Posterior cingulate gyrus (tissue), 11 donors: ENCODE measurements at regions of chr12 and their contacts with region 1.

Region 1: DNA sequence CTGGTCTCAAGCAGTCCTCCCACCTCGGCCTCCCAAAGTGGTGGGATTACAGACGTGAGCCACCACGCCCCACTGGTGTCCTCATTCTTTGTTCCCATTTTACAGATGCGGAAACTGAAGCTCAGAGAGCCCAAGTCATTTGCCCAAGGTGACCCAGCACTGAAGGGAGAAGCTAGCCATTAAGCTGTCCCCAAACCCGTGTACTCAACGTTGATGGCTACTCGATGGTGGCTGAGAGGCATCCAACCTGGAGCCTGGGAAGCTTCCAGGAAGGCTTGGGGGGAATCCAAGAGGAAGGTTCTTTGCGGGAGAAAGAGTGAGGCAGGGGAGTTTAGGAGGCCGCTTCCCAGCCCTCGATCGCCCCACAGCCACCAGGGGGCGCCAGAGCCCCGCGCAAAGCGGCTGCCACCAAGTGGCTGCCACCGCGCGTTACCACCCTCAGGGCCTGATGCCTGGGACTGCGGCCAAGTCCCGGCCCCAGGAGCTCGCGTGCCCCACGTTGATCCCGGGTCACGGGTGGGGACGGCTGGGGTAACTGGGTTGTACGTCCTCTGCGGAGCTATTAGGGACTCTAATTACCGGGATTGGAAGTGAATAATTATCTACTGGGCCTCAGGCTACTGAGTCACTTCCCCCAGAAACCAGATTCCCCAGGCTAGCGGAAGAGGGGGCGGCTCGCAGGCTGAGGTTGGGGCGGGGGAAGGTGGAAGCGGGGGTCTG is 8.8 kb upstream of the SH2B3 start:
- DNase-seq: peak; percentile 67 to 98 (median 86)

Region 2: DNA sequence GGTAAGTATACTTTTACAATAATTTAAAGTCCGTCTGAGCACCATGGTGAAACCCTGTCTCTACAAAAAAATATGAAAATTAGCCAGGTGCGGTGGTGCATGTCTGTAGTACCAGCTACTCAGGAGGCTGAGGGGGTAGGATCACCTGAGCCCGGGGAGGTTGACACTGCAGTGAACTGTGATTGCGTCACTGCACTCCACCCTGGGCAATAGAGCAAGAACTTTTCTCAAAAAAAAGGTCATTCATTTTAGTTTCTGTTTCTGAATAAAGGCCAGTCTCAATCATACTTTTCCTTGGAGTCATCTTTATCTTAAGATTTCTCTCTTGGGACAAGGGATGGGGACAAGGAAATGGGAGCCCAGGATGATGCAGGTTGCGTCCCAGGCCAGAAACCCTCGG is 1384.7 kb before region 1 on chr12:
- intact Hi-C with region 1: no loop called
- DNase-seq: no peak

Region 3: DNA sequence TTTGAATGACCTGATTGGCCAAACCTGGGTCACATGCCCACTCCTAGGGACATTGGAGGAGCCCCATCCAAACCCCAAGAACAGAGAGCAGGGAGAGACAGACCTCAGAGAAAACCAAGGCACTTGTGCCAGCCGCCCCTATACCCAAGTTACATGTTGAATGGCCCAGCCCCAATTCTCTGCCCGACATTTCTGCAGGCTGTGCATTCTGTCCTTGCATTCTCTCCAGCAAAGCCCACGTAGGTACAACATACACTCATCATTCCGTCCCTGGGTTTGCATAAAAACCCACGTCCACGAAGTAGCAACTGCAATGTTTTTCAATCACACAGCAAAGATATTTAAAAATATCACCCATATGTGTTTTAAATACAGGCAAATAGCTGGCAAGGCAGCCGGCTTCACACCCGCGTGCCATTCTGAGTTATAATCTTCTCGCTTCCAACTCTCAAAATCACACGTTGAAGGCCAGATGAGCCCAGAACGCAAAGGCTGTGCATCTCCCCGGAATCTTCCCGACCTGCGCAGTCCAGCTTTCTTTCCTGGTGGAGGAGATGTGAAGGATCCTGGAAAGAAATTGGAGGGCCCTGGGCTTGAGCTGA is 384.8 kb before region 1 on chr12:
- intact Hi-C with region 1: no loop called
- DNase-seq: peak in 7 of 10 donors; percentile 36 to 92 (median 66)

Region 4: DNA sequence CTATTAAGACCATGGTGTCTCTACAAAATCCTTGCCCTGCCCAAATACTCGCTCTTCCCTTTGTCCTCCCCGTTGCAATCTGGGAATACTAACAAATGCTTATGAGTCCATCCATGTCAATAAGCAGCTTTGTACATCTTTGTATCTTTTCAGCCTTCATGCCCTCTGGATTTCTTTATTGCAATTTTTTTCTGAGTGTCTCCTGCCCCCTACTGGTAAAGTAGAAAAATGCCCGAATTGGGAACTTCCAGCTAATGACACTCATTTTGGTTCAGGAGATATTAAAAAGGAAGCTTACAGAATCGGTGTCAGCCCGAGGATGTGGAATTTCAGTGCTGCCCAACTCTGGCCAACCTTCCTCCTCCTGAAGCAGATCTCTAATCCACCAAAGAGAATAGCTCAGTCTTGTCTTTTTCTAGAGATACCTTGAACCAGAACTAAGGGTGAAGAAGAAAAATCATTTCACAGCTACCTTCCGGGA is 54.8 kb after region 1 on chr12:
- intact Hi-C with region 1: loop called (anchors 1 kb)
- DNase-seq: no peak

Region 5: DNA sequence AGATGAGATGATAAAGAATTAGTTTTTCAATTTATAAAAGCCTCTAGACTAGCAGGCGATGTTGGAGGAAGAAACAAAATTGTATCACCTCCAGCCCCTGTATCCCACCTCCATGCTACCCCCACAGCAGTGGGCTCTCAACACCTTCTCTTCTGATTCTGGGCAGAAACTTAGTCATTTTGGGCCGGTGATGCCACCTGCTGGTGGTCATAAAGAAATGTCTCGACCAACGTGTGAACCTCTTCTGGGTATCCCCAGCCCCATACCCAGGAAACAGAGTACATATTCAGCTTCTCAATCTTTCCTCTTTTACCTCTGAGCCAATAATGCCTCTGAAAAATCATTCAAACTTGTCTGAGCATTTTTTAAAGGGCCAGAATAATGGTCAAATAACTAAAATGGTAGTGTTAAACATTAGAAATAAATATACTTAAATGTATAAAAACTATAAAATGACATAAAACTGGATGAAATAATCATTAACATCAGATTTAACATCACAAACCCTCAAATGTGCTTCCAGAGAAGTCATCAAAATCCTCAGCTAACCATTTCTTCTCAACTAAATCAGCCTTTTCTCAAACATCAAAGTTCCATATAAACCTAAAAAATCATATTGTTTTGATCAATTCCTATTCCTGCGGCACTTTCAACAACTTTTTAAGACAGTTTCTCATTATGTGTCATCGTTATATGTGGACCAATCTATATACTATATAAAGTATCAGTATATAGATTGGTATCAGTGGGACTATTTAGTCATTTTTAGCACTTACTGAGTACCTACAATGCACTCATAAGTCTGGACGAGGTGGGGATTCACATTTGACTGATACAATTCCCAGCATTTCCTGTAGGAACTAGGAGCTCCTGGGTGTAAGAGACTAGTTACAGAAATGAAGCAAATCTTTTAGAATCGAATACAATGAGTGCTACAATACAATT is 132.8 kb after region 1 on chr12:
- intact Hi-C with region 1: loop called (anchors 1 kb)
- DNase-seq: peak in 6 of 10 donors; percentile 32 to 90 (median 50)

Region 6: DNA sequence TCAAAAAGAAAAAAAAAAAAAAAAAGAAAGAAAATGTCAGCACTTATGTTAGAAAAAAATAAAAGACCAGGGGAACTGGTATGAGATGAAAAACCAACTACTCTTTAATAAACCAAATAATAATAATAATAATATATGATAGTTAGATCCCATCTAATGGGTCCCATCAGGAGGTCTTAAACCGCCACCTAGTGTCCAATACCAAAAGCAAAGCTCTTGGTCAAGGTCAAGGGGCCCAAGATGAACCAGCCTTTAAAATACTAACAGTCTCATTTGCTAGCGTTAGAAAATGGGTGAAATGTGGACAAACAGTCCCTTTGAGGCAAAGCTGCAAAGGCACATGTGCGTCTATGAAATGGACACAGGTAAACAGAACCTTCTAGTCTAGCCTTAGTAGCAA is 276.6 kb after region 1 on chr12:
- intact Hi-C with region 1: loop called (anchors 10 kb)
- DNase-seq: no peak